CD4-positive, alpha-beta memory T cell (primary cell): ENCODE measurements at regions of chr19 and their contacts with region 1.

Region 1: DNA sequence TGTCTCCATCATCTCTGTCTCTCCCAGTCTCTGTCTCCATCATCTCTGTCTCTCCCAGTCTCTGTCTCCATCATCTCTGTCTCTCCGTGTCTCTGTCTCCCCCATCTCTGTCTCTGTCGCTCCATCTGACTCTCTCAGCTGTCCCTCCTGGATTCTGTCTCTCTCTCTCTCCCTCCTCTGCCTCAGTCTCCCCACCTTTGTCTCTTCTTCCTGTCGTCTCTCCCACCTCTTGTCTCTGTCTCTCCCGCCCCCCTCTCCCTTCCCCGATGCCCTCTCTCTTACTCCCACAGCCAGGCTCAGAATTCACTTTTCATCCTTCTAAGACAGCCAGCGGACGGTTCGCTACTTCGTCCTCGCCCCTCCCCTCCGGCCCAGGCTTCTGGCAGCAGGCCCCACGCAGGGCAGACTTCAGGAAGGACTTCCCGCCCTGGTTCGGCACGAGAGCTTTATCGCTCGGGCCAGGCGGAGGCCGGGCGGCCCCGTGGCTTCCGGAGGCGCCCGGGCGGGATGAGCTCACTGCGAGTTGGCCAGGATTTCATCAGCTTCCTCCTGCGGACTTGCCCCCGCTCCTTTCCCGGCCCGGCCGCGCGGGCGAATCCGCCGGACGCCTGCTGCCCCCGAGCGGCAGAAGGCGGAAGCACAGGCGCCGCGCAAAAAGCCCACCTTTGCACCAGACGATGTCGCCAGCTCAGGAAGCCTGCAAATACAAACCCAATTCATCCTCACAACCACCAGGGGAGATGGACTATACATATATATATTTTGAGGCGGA is 12.4 kb upstream of the CCDC9 start:
- DNase-seq: peak; percentile 85 to 91 (median 87)
- H3K4me3 ChIP-seq: peak overlapping the region; percentile 21 to 37
- H3K4me3 Mint-ChIP-seq: peak overlapping the region; percentile 63 to 89 (median 84)
- H3K27ac ChIP-seq: peak overlapping the region; percentile 40
- H3K27ac Mint-ChIP-seq: peak overlapping the region in 6 of 7 donors; percentile 86 to 99 (median 96)
- H3K4me1 ChIP-seq: peaks cover 48% of the 10 kb centered on the region
- H3K4me1 Mint-ChIP-seq: peaks cover 11 to 33% (median 22%) of the 10 kb centered on the region in 4 donors
- H3K27me3 ChIP-seq: no peaks in the 10 kb centered on the region
- H3K27me3 Mint-ChIP-seq: no peaks in the 10 kb centered on the region

Region 2: GRCh38 chr19:47081111-47081510 is 162.9 kb before region 1 on chr19:
- CTCF ChIA-PET with region 1: interaction called, 17 read pairs
- POLR2A ChIA-PET with region 1: no interaction called
- intact Hi-C with region 1: no loop called
- DNase-seq: no peak
- H3K4me3 ChIP-seq: no peak overlapping the region
- H3K4me3 Mint-ChIP-seq: no peak overlapping the region
- H3K27ac ChIP-seq: no peak overlapping the region
- H3K27ac Mint-ChIP-seq: peak overlapping the region in 1 of 7 donors; percentile 24
- H3K4me1 ChIP-seq: no peaks in the 10 kb centered on the region
- H3K4me1 Mint-ChIP-seq: peaks cover 0 to 4% (median 0%) of the 10 kb centered on the region in 4 donors
- H3K27me3 ChIP-seq: no peaks in the 10 kb centered on the region
- H3K27me3 Mint-ChIP-seq: no peaks in the 10 kb centered on the region

Region 3: GRCh38 chr19:47152224-47153017 is 91.5 kb before region 1 on chr19:
- CTCF ChIA-PET with region 1: interaction called, 609 read pairs
- POLR2A ChIA-PET with region 1: interaction called, 46 read pairs
- intact Hi-C with region 1: loop called (anchors 1 kb)
- DNase-seq: no peak
- H3K4me3 ChIP-seq: no peak overlapping the region
- H3K4me3 Mint-ChIP-seq: no peak overlapping the region
- H3K27ac ChIP-seq: no peak overlapping the region
- H3K27ac Mint-ChIP-seq: no peak overlapping the region
- H3K4me1 ChIP-seq: peaks cover 47% of the 10 kb centered on the region
- H3K4me1 Mint-ChIP-seq: peaks cover 26 to 65% (median 43%) of the 10 kb centered on the region in 4 donors
- H3K27me3 ChIP-seq: no peaks in the 10 kb centered on the region
- H3K27me3 Mint-ChIP-seq: no peaks in the 10 kb centered on the region

Region 4: GRCh38 chr19:47190167-47190727 is 53.7 kb before region 1 on chr19:
- CTCF ChIA-PET with region 1: interaction called, 40 read pairs
- POLR2A ChIA-PET with region 1: interaction called, 29 read pairs
- intact Hi-C with region 1: no loop called
- DNase-seq: peak; percentile 60 to 78 (median 64)
- H3K4me3 ChIP-seq: no peak overlapping the region
- H3K4me3 Mint-ChIP-seq: peak overlapping the region in 7 of 8 donors; percentile 5 to 81 (median 56)
- H3K27ac ChIP-seq: peak overlapping the region; percentile 47
- H3K27ac Mint-ChIP-seq: peak overlapping the region; percentile 62 to 94 (median 85)
- H3K4me1 ChIP-seq: peaks cover 72% of the 10 kb centered on the region
- H3K4me1 Mint-ChIP-seq: peaks cover 40 to 71% (median 48%) of the 10 kb centered on the region in 4 donors
- H3K27me3 ChIP-seq: no peaks in the 10 kb centered on the region
- H3K27me3 Mint-ChIP-seq: no peaks in the 10 kb centered on the region

Region 5: DNA sequence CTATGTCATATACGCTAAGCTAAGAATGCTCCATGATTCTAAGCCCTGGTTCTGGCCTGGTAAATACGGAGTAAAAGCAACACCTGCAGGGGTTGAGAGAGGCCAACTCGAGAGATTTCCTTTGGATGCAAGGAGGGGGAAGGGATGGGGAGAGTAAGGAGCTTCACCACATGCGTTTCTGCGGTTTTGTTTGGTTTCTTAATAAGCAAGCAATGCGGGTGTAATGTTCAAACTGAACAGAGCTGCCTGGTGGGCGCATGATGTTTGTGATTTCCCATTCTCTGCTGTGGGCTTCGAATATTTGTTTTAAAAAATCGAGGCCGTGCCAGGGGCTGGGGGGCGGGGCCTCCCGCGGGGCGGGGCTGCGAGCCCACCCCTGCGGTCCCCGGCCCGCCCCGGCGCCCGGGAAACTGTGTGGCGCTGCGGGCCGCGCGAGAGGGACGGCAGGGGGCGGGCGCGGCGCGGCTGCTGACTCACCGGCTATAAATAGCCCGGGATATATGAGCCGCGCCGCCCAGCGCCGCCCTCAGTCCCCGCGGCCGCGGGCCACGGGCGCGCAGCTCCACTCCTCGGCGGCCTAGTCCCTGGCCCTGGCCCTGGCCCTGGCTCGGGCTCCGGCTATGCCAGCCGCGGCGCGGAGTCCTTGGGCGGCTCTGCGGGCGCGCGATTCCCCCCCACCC is 18.1 kb before region 1 on chr19:
- CTCF ChIA-PET with region 1: interaction called, 62 read pairs
- POLR2A ChIA-PET with region 1: interaction called, 156 read pairs
- intact Hi-C with region 1: loop called (anchors 1 kb)
- DNase-seq: peak; percentile 83 to 87 (median 84)
- H3K4me3 ChIP-seq: peak overlapping the region in 1 of 2 donors; percentile 52
- H3K4me3 Mint-ChIP-seq: peak overlapping the region; percentile 22 to 79 (median 64)
- H3K27ac ChIP-seq: peak overlapping the region; percentile 80
- H3K27ac Mint-ChIP-seq: peak overlapping the region; percentile 74 to 96 (median 89)
- H3K4me1 ChIP-seq: peaks cover 41% of the 10 kb centered on the region
- H3K4me1 Mint-ChIP-seq: peaks cover 5 to 20% (median 11%) of the 10 kb centered on the region in 4 donors
- H3K27me3 ChIP-seq: no peaks in the 10 kb centered on the region
- H3K27me3 Mint-ChIP-seq: no peaks in the 10 kb centered on the region

Region 6: GRCh38 chr19:47273313-47273977 is 29.5 kb after region 1 on chr19:
- CTCF ChIA-PET with region 1: interaction called, 14 read pairs
- POLR2A ChIA-PET with region 1: interaction called, 14 read pairs
- intact Hi-C with region 1: no loop called
- DNase-seq: peak; percentile 87 to 92 (median 89)
- H3K4me3 ChIP-seq: peak overlapping the region; percentile 89 to 100
- H3K4me3 Mint-ChIP-seq: peak overlapping the region; percentile 92 to 99 (median 97)
- H3K27ac ChIP-seq: peak overlapping the region; percentile 96
- H3K27ac Mint-ChIP-seq: peak overlapping the region; percentile 97 to 99 (median 99)
- H3K4me1 ChIP-seq: peaks cover 19% of the 10 kb centered on the region
- H3K4me1 Mint-ChIP-seq: peaks cover 15 to 33% (median 19%) of the 10 kb centered on the region in 4 donors
- H3K27me3 ChIP-seq: no peaks in the 10 kb centered on the region
- H3K27me3 Mint-ChIP-seq: no peaks in the 10 kb centered on the region